CD8-positive, alpha-beta T cell (primary cell): ENCODE measurements at regions of chr12 and their contacts with region 1.

Region 1: GRCh38 chr12:109052414-109053323 is at the start of gene USP30:
- DNase-seq: peak; percentile 73 to 93 (median 85)
- ATAC-seq: peak; percentile 74
- H3K4me3 ChIP-seq: peak within 1 kb of the TSS; percentile 85 to 90
- H3K4me3 Mint-ChIP-seq: peak within 1 kb of the TSS; percentile 89
- H3K27ac ChIP-seq: peak within 1 kb of the TSS; percentile 68 to 91
- H3K27ac Mint-ChIP-seq: peak within 1 kb of the TSS; percentile 96
- H3K4me1 ChIP-seq: peaks cover 7% of the 10 kb centered on the region
- H3K4me1 Mint-ChIP-seq: peaks cover 21% of the 10 kb centered on the region
- H3K27me3 ChIP-seq: no peaks in the 10 kb centered on the region
- H3K27me3 Mint-ChIP-seq: no peaks in the 10 kb centered on the region
- CTCF ChIP-seq: no peak
- total RNA-seq, gene USP30: 28.2 to 33.1 TPM

Region 2: GRCh38 chr12:109033234-109034196 is 19.2 kb before region 1 on chr12:
- CTCF ChIA-PET with region 1: no interaction called
- POLR2A ChIA-PET with region 1: no interaction called
- intact Hi-C with region 1: no loop called
- DNase-seq: no peak
- ATAC-seq: no peak
- H3K4me3 ChIP-seq: no peak overlapping the region
- H3K4me3 Mint-ChIP-seq: no peak overlapping the region
- H3K27ac ChIP-seq: no peak overlapping the region
- H3K27ac Mint-ChIP-seq: no peak overlapping the region
- H3K4me1 ChIP-seq: no peaks in the 10 kb centered on the region
- H3K4me1 Mint-ChIP-seq: no peaks in the 10 kb centered on the region
- H3K27me3 ChIP-seq: peaks cover 0 to under 1% of the 10 kb centered on the region in 2 experiments
- H3K27me3 Mint-ChIP-seq: peaks cover 13% of the 10 kb centered on the region
- CTCF ChIP-seq: no peak

Region 3: GRCh38 chr12:109154451-109155438 is 102.1 kb after region 1 on chr12:
- CTCF ChIA-PET with region 1: no interaction called
- POLR2A ChIA-PET with region 1: interaction called, 6 read pairs
- intact Hi-C with region 1: loop called (anchors 1 to 2 kb)
- DNase-seq: peak; percentile 60 to 89 (median 78)
- ATAC-seq: peak; percentile 98
- H3K4me3 ChIP-seq: peak overlapping the region; percentile 60 to 80
- H3K4me3 Mint-ChIP-seq: peak overlapping the region; percentile 95
- H3K27ac ChIP-seq: peak overlapping the region; percentile 22 to 46
- H3K27ac Mint-ChIP-seq: peak overlapping the region; percentile 89
- H3K4me1 ChIP-seq: peaks cover 20% of the 10 kb centered on the region
- H3K4me1 Mint-ChIP-seq: peaks cover 17% of the 10 kb centered on the region
- H3K27me3 ChIP-seq: no peaks in the 10 kb centered on the region
- H3K27me3 Mint-ChIP-seq: peaks cover 3% of the 10 kb centered on the region
- CTCF ChIP-seq: no peak